Psoas muscle (tissue), 8 donors: ENCODE measurements at regions of chr3 and their contacts with region 1.

Region 1: DNA sequence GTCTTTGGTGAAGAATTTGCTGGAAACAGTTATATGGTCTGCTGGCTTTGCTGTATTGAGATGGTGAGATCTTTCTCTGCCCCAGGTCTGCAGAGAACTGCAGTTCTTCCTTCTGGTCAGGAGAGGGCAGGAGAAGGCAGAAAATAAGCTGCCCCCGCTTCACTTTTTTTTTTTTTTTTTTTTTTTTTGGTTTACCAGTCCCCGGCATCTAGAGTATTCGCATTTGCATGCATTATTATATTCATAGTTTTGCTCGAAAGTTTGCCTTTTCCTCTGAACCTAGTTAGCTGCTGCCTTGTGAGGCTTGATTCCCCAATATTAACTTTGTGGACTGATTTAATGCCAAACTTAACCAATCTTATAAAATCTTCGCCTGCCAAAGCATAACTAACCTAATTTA is 10.6 kb upstream of the PARL start:
- DNase-seq: no peak
- ATAC-seq: peak; percentile 77 to 93 (median 86)
- H3K4me3 ChIP-seq: no peak overlapping the region
- H3K27ac ChIP-seq: no peak overlapping the region
- H3K4me1 ChIP-seq: no peaks in the 10 kb centered on the region
- H3K27me3 ChIP-seq: no peaks in the 10 kb centered on the region
- CTCF ChIP-seq: peak; percentile 86

Region 2: DNA sequence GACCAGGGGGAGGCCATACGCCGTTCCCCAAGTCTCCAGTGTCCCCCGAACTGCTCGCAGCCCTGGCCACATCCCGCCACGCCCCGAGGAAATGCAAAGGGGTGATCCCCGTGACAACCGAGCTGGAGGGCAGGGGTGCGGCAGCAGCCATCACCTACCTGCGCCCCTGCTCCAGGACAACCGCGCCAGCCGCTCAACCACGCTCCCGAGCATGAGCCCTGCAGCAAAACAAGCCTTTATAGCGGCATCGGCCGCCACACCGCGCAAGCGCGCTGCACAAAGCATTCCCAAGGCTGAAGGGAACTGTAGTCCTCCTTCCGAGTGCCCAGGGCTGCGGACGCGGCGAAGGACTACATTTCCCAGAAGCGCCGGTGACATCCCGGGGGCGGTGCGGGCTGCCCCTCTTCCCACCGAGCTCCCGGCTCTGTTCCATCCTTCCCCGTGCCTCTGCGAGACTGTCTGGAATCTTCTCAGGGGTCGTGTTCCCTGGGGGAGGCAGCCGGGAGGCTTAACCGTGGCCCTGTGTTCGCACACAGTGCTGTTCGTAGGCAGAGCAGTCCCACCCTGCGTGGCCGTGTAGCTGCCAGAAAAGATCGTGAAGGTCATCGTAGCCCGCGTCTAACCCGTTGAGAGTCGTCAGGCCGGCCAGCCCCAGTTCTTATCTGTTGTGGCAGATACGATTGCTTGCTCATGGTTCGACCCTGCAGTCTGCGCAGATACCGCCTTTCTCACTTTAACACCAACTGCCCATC is 122.6 kb after region 1 on chr3 and contains the start of gene ABCC5:
- intact Hi-C with region 1: loop called (anchors 2 to 5 kb)
- DNase-seq: peak; percentile 94 to 97
- ATAC-seq: peak; percentile 91 to 94 (median 94)
- H3K4me3 ChIP-seq: peak within 1 kb of the TSS; percentile 96
- H3K27ac ChIP-seq: peak within 1 kb of the TSS; percentile 89
- H3K4me1 ChIP-seq: peaks cover 25% of the 10 kb centered on the region
- H3K27me3 ChIP-seq: no peaks in the 10 kb centered on the region
- CTCF ChIP-seq: no peak
- total RNA-seq, gene ABCC5: 34.4 to 94.2 (median 55.6) TPM

Region 3: DNA sequence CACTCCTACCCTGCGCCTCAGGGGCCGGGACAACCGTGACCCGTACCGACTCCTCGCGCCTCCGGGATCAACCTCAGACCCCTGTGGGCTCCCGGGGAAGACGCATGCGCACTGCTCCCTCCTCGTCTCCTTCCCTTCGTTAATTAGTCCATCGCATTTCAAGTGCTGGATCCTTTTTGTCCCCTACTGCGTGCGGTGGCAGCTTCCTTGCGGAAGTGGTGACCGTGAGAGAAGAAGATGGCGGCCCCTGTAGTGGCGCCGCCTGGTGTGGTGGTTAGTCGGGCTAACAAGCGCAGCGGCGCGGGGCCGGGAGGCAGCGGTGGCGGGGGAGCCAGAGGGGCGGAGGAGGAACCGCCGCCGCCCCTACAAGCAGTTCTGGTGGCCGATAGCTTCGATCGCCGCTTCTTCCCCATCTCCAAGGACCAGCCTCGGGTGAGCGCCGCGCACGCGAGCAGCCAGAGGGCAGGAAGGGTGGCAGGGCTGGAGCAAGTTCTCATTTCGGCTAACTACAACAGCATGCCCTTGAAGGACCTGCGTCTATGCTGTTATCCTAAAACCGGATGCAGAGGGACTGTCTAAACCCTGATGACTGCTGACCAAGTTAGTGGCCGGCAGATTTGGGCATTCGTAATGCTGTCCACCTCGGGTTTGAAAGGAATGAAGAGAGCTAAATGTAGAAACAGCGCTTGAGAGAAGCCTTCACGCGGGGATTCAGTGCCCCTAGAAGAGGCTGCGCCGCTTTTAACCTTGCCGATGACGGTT is 240.0 kb after region 1 on chr3 and contains the start of gene EIF2B5:
- intact Hi-C with region 1: loop called (anchors 5 to 10 kb)
- DNase-seq: peak; percentile 92 to 95
- ATAC-seq: peak; percentile 93 to 95 (median 94)
- H3K4me3 ChIP-seq: peak within 1 kb of the TSS; percentile 96
- H3K27ac ChIP-seq: peak within 1 kb of the TSS; percentile 93
- H3K4me1 ChIP-seq: peaks cover 11% of the 10 kb centered on the region
- H3K27me3 ChIP-seq: no peaks in the 10 kb centered on the region
- CTCF ChIP-seq: peak; percentile 35
- total RNA-seq, gene EIF2B5: 44.0 to 55.1 (median 50.0) TPM

Region 4: GRCh38 chr3:184145111-184145524 is 249.8 kb after region 1 on chr3:
- intact Hi-C with region 1: loop called in 1 of 2 experiments (anchors 10 kb)
- DNase-seq: peak in 1 of 2 donors; percentile 62
- ATAC-seq: peak; percentile 80 to 91 (median 88)
- H3K4me3 ChIP-seq: no peak overlapping the region
- H3K27ac ChIP-seq: peak overlapping the region; percentile 68
- H3K4me1 ChIP-seq: peaks cover 20% of the 10 kb centered on the region
- H3K27me3 ChIP-seq: no peaks in the 10 kb centered on the region
- CTCF ChIP-seq: peak; percentile 57

Region 5: GRCh38 chr3:184250167-184250828 is 355.0 kb after region 1 on chr3:
- intact Hi-C with region 1: loop called (anchors 2 to 10 kb)
- DNase-seq: peak; percentile 87 to 91
- ATAC-seq: peak; percentile 80 to 85 (median 82)
- H3K4me3 ChIP-seq: peak overlapping the region; percentile 79
- H3K27ac ChIP-seq: peak overlapping the region; percentile 90
- H3K4me1 ChIP-seq: peaks cover 15% of the 10 kb centered on the region
- H3K27me3 ChIP-seq: no peaks in the 10 kb centered on the region
- CTCF ChIP-seq: peak; percentile 95

Region 6: GRCh38 chr3:184289426-184289938 is 394.2 kb after region 1 on chr3:
- intact Hi-C with region 1: loop called (anchors 5 to 10 kb)
- DNase-seq: peak; percentile 45 to 71
- ATAC-seq: peak; percentile 65 to 88 (median 82)
- H3K4me3 ChIP-seq: no peak overlapping the region
- H3K27ac ChIP-seq: no peak overlapping the region
- H3K4me1 ChIP-seq: no peaks in the 10 kb centered on the region
- H3K27me3 ChIP-seq: no peaks in the 10 kb centered on the region
- CTCF ChIP-seq: peak; percentile 57